Ascending aorta (tissue), 2 donors: ENCODE measurements at regions of chr4 and their contacts with region 1.

Region 1: DNA sequence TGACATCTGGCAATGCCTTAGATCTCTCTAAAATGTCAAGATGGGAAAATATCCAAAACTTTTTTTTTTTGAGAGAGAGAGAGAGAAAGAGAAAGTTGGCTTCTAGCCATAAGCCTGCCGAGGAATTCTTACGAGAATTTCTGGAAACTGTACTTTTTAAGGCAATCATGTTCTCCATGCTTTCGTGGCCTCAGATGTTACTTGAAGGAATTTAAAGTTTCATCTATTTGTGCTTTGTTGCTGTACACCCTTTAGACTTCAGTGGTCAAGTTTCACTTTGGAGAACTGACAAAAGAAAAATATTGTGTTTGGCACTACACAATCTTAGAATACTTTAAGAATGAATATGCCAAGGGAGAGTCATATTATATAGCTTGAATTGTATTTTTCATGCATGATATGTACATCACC is 53.9 kb downstream of the FAT4 start:
- DNase-seq: no peak
- H3K4me3 ChIP-seq: peak overlapping the region; percentile 49 to 53
- H3K27ac ChIP-seq: peak overlapping the region; percentile 55 to 65
- H3K4me1 ChIP-seq: peaks cover 0 to 11% of the 10 kb centered on the region in 2 donors
- H3K27me3 ChIP-seq: no peaks in the 10 kb centered on the region
- CTCF ChIP-seq: no peak

Region 2: GRCh38 chr4:125389713-125390112 is 21.0 kb after region 1 on chr4:
- intact Hi-C with region 1: loop called (anchors 2 kb)
- DNase-seq: no peak
- H3K4me3 ChIP-seq: no peak overlapping the region
- H3K27ac ChIP-seq: peak overlapping the region; percentile 83 to 91
- H3K4me1 ChIP-seq: peaks cover 9 to 30% of the 10 kb centered on the region in 2 donors
- H3K27me3 ChIP-seq: no peaks in the 10 kb centered on the region
- CTCF ChIP-seq: no peak

Region 3: GRCh38 chr4:125432104-125432503 is 63.4 kb after region 1 on chr4:
- intact Hi-C with region 1: no loop called
- DNase-seq: no peak
- H3K4me3 ChIP-seq: no peak overlapping the region
- H3K27ac ChIP-seq: no peak overlapping the region
- H3K4me1 ChIP-seq: peaks cover 0 to 7% of the 10 kb centered on the region in 2 donors
- H3K27me3 ChIP-seq: no peaks in the 10 kb centered on the region
- CTCF ChIP-seq: no peak